ENCODE measurements at regions of chr6 and their contacts with region 1.

Region 1: DNA sequence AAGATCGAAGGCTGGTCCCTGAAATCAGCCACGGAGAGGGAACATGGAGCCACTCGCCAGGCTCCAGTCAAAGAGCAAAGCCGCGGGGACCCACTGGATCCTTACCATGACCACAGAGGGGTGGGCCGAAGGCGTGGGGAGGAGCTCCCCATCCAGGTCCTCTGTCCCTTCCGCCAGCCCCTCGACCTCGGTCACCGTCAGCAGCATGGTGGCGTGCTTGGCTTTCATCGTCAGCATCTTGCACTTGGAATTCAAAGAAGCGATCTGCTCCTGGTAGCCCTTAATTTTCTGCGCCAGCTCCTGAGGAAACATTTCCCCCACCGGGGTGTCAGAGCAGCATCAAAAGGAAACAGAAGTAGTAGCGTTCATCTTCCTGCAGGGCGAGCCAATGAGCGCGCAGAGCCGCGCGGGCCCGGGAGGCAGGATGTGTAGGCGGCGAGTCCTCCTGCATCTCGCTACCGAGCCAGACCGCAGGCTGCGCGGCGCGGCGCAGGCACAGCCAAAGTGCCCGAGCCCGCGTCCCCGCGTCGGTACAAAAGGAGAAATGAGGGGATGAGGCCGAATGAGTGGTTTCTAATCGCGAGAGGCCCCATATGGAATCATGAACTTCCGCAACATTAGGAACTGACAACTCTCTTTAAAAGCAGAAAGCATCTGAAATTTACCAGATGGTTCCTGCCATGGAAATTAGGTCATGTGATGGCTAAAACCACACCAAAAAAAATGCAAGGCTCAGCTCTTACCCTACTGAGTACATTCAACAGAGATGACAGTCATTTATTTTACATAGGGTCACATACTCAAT is 335.2 kb downstream of the SYNE1 start:
- DNase-seq: peak; percentile 92
- ATAC-seq: peak; percentile 96
- H3K4me3 ChIP-seq: peak overlapping the region; percentile 68 to 96 (median 79)
- H3K4me3 Mint-ChIP-seq: peak overlapping the region; percentile 100
- H3K27ac ChIP-seq: peak overlapping the region; percentile 80 to 81
- H3K27ac Mint-ChIP-seq: peak overlapping the region; percentile 99
- H3K4me1 ChIP-seq: peaks cover 19 to 28% of the 10 kb centered on the region in 2 donors
- H3K4me1 Mint-ChIP-seq: peaks cover 40% of the 10 kb centered on the region
- H3K27me3 ChIP-seq: no peaks in the 10 kb centered on the region
- H3K27me3 Mint-ChIP-seq: no peaks in the 10 kb centered on the region
- CTCF ChIP-seq: peak; percentile 80

Region 2: GRCh38 chr6:151451950-151452749 is 849.8 kb before region 1 on chr6 and contains the start of gene RMND1:
- CTCF ChIA-PET with region 1: no interaction called
- POLR2A ChIA-PET with region 1: no interaction called
- intact Hi-C with region 1: loop called (anchors 5 kb)
- DNase-seq: peak; percentile 100
- ATAC-seq: peak; percentile 94
- H3K4me3 ChIP-seq: peak within 1 kb of the TSS; percentile 74 to 94 (median 88)
- H3K4me3 Mint-ChIP-seq: peak within 1 kb of the TSS; percentile 97
- H3K27ac ChIP-seq: peak within 1 kb of the TSS; percentile 64 to 88
- H3K27ac Mint-ChIP-seq: peak within 1 kb of the TSS; percentile 88
- H3K4me1 ChIP-seq: peaks cover 18 to 20% of the 10 kb centered on the region in 2 donors
- H3K4me1 Mint-ChIP-seq: peaks cover 32% of the 10 kb centered on the region
- H3K27me3 ChIP-seq: no peaks in the 10 kb centered on the region
- H3K27me3 Mint-ChIP-seq: no peaks in the 10 kb centered on the region
- CTCF ChIP-seq: no peak
- total RNA-seq, gene RMND1: 15.7 and 19.8 TPM in 2 replicates

Region 3: GRCh38 chr6:152184917-152185574 is 116.9 kb before region 1 on chr6:
- CTCF ChIA-PET with region 1: interaction called, 5 read pairs
- POLR2A ChIA-PET with region 1: interaction called, 3 read pairs
- intact Hi-C with region 1: loop called (anchors 10 kb)
- DNase-seq: peak; percentile 42
- ATAC-seq: peak; percentile 62
- H3K4me3 ChIP-seq: peak overlapping the region; percentile 24 to 75 (median 48)
- H3K4me3 Mint-ChIP-seq: peak overlapping the region; percentile 99
- H3K27ac ChIP-seq: peak overlapping the region; percentile 76 to 82
- H3K27ac Mint-ChIP-seq: peak overlapping the region; percentile 99
- H3K4me1 ChIP-seq: peaks cover 24 to 35% of the 10 kb centered on the region in 2 donors
- H3K4me1 Mint-ChIP-seq: peaks cover 62% of the 10 kb centered on the region
- H3K27me3 ChIP-seq: no peaks in the 10 kb centered on the region
- H3K27me3 Mint-ChIP-seq: no peaks in the 10 kb centered on the region
- CTCF ChIP-seq: no peak

Region 4: GRCh38 chr6:152338335-152339125 is 36.6 kb after region 1 on chr6:
- CTCF ChIA-PET with region 1: interaction called, 67 read pairs
- POLR2A ChIA-PET with region 1: interaction called, 4 read pairs
- intact Hi-C with region 1: loop called (anchors 1 kb)
- DNase-seq: peak; percentile 63
- ATAC-seq: peak; percentile 63
- H3K4me3 ChIP-seq: no peak overlapping the region
- H3K4me3 Mint-ChIP-seq: no peak overlapping the region
- H3K27ac ChIP-seq: no peak overlapping the region
- H3K27ac Mint-ChIP-seq: no peak overlapping the region
- H3K4me1 ChIP-seq: peaks cover 0 to 3% of the 10 kb centered on the region in 2 donors
- H3K4me1 Mint-ChIP-seq: peaks cover 2% of the 10 kb centered on the region
- H3K27me3 ChIP-seq: no peaks in the 10 kb centered on the region
- H3K27me3 Mint-ChIP-seq: peaks cover 9% of the 10 kb centered on the region
- CTCF ChIP-seq: peak; percentile 96

Region 5: DNA sequence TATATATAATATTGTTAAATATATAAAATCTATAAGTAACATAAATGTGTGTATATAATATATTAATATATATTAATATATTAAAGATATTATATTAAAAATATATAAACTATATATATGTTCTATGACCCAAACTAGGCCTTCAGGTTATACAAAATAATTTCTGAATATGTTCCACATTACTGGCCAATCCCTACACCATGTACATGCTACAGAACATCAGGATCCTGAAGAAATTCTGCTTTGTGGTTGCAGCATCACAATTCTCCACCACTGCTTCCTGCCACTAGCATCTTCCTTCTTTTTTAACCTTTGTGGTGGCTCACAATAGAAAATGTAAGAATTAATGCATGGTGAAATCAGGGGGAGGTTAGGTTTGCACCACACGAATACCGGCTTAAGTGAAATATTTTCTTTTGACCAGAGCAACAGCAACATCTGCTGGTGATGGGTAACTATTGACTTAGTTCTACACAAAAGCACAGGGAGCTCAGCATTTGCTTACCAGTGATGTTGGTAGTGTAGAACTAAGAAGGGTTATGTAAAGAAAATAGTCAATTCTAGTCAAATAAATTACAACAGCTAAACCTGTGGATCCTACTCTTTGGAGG is 54.6 kb after region 1 on chr6:
- CTCF ChIA-PET with region 1: no interaction called
- POLR2A ChIA-PET with region 1: no interaction called
- intact Hi-C with region 1: loop called (anchors 5 kb)
- DNase-seq: peak; percentile 27
- ATAC-seq: no peak
- H3K4me3 ChIP-seq: no peak overlapping the region
- H3K4me3 Mint-ChIP-seq: no peak overlapping the region
- H3K27ac ChIP-seq: no peak overlapping the region
- H3K27ac Mint-ChIP-seq: no peak overlapping the region
- H3K4me1 ChIP-seq: no peaks in the 10 kb centered on the region
- H3K4me1 Mint-ChIP-seq: no peaks in the 10 kb centered on the region
- H3K27me3 ChIP-seq: peaks cover 0 to 5% (median 2%) of the 10 kb centered on the region in 4 experiments
- H3K27me3 Mint-ChIP-seq: no peaks in the 10 kb centered on the region
- CTCF ChIP-seq: peak; percentile 38

Region 6: DNA sequence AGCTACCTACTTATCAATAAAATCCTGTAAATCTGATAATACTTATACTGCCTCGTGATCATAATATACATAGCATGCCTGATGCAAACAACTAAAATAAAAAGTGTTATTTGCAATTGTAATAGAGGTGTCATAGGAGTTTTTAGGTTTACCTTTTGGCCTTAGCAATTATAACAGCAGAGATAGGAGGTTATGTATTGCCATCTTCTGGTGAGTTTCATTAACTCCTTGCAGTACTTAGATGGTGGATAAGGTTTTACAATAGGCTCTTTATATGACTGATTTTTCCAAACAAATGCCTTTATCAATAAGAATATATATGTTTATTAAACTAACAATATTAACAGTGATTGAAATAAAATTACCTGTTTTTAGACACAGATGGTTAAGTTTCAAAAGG is 367.9 kb after region 1 on chr6:
- CTCF ChIA-PET with region 1: no interaction called
- POLR2A ChIA-PET with region 1: no interaction called
- intact Hi-C with region 1: no loop called
- DNase-seq: no peak
- ATAC-seq: no peak
- H3K4me3 ChIP-seq: no peak overlapping the region
- H3K4me3 Mint-ChIP-seq: no peak overlapping the region
- H3K27ac ChIP-seq: no peak overlapping the region
- H3K27ac Mint-ChIP-seq: no peak overlapping the region
- H3K4me1 ChIP-seq: no peaks in the 10 kb centered on the region
- H3K4me1 Mint-ChIP-seq: no peaks in the 10 kb centered on the region
- H3K27me3 ChIP-seq: peaks cover 0 to 2% (median 0%) of the 10 kb centered on the region in 4 experiments
- H3K27me3 Mint-ChIP-seq: peaks cover 6% of the 10 kb centered on the region
- CTCF ChIP-seq: no peak

Region 7: GRCh38 chr6:152982768-152983636 is 681.0 kb after region 1 on chr6 and contains the start of gene FBXO5:
- CTCF ChIA-PET with region 1: no interaction called
- POLR2A ChIA-PET with region 1: no interaction called
- intact Hi-C with region 1: loop called (anchors 2 kb)
- DNase-seq: peak; percentile 98
- ATAC-seq: peak; percentile 93
- H3K4me3 ChIP-seq: peak within 1 kb of the TSS; percentile 60 to 91 (median 81)
- H3K4me3 Mint-ChIP-seq: peak within 1 kb of the TSS; percentile 96
- H3K27ac ChIP-seq: peak within 1 kb of the TSS; percentile 85 to 86
- H3K27ac Mint-ChIP-seq: peak within 1 kb of the TSS; percentile 96
- H3K4me1 ChIP-seq: peaks cover 22 to 32% of the 10 kb centered on the region in 2 donors
- H3K4me1 Mint-ChIP-seq: peaks cover 39% of the 10 kb centered on the region
- H3K27me3 ChIP-seq: no peaks in the 10 kb centered on the region
- H3K27me3 Mint-ChIP-seq: no peaks in the 10 kb centered on the region
- CTCF ChIP-seq: no peak
- total RNA-seq, gene FBXO5: 14.1 and 14.6 TPM in 2 replicates

Measured in B cell (primary cell).